CD4-positive, alpha-beta memory T cell (primary cell): ENCODE measurements at regions of chr1 and their contacts with region 1.

Region 1: GRCh38 chr1:86380257-86380861 is 15.8 kb downstream of the ODF2L start:
- DNase-seq: peak in 4 of 5 donors; percentile 49 to 59 (median 54)
- H3K4me3 ChIP-seq: no peak overlapping the region
- H3K4me3 Mint-ChIP-seq: peak overlapping the region in 2 of 8 donors; percentile 38 to 55
- H3K27ac ChIP-seq: no peak overlapping the region
- H3K27ac Mint-ChIP-seq: peak overlapping the region in 3 of 7 donors; percentile 32 to 48 (median 42)
- H3K4me1 ChIP-seq: peaks cover 17% of the 10 kb centered on the region
- H3K4me1 Mint-ChIP-seq: peaks cover 8 to 30% (median 12%) of the 10 kb centered on the region in 4 donors
- H3K27me3 ChIP-seq: no peaks in the 10 kb centered on the region
- H3K27me3 Mint-ChIP-seq: no peaks in the 10 kb centered on the region

Region 2: DNA sequence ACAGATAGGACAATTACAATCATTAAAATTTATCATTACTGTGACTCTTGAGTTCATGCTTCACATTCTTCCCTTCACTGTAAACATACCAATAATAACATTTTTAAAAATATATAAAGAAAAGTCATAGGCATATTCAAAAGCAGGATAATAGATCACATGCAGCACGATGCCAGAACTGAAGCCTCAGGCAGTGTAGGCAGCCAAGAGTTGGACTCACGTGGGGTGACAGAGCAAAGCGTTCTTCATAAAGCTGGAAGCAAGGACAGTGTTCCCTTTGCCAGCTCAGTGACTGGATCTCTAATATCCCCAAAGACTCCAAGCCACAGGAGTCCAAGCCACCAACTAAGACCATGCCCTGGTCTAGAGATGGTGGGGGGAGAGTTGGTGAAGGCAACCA is 61.9 kb before region 1 on chr1:
- CTCF ChIA-PET with region 1: no interaction called
- POLR2A ChIA-PET with region 1: no interaction called
- intact Hi-C with region 1: no loop called
- DNase-seq: no peak
- H3K4me3 ChIP-seq: no peak overlapping the region
- H3K4me3 Mint-ChIP-seq: no peak overlapping the region
- H3K27ac ChIP-seq: no peak overlapping the region
- H3K27ac Mint-ChIP-seq: peak overlapping the region in 1 of 7 donors; percentile 3
- H3K4me1 ChIP-seq: no peaks in the 10 kb centered on the region
- H3K4me1 Mint-ChIP-seq: no peaks in the 10 kb centered on the region
- H3K27me3 ChIP-seq: no peaks in the 10 kb centered on the region
- H3K27me3 Mint-ChIP-seq: peaks cover 3 to 4% of the 10 kb centered on the region in 2 donors

Region 3: DNA sequence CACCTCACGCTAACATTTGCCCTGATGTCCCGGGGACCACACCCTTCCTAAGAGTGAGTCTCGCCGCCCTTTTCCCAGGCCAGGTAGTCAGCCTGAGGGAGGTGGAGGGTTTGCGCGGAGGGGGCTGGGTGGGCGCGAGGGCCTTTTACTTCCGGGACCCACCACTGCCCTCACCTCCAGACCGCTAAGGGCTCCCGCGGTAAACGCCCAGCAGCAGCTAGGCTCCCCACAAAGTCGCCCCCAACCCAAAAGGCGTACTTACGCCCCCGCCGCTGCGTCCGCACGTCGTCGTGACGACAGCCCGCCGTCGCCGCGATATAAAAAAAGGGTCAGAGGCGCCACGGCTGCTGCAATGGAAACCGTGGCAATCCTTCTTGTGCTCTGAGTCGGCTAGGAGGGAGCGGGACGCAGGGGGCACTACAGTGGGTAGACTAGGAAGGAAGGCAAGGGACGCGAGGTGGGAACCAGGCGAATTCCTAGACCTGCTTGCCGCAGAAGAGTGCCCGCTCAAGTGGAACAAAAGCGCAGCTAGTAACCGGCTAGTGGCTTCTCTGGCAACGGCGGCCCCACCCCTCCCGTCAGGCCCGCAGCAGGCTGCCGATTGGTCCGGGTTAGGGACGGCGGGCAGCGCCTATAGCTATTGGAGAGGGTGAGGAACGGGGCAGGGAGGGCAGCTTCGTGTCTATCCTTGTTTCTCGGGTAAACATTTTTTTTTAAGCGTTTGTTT is 15.6 kb after region 1 on chr1 and contains the start of gene ODF2L:
- CTCF ChIA-PET with region 1: interaction called, 13 read pairs
- POLR2A ChIA-PET with region 1: interaction called, 54 read pairs
- intact Hi-C with region 1: loop called (anchors 1 kb)
- DNase-seq: peak; percentile 90 to 94 (median 92)
- H3K4me3 ChIP-seq: peak within 1 kb of the TSS; percentile 77 to 87
- H3K4me3 Mint-ChIP-seq: peak within 1 kb of the TSS; percentile 94 to 99 (median 98)
- H3K27ac ChIP-seq: peak within 1 kb of the TSS; percentile 92
- H3K27ac Mint-ChIP-seq: peak within 1 kb of the TSS; percentile 97 to 100 (median 99)
- H3K4me1 ChIP-seq: peaks cover 56% of the 10 kb centered on the region
- H3K4me1 Mint-ChIP-seq: peaks cover 43 to 68% (median 51%) of the 10 kb centered on the region in 4 donors
- H3K27me3 ChIP-seq: no peaks in the 10 kb centered on the region
- H3K27me3 Mint-ChIP-seq: no peaks in the 10 kb centered on the region
- total RNA-seq, gene ODF2L: 97.3 to 98.3 TPM

Region 4: GRCh38 chr1:86419277-86419903 is 39.0 kb after region 1 on chr1:
- CTCF ChIA-PET with region 1: interaction called, 8 read pairs
- POLR2A ChIA-PET with region 1: no interaction called
- intact Hi-C with region 1: loop called (anchors 1 kb)
- DNase-seq: peak; percentile 47 to 62 (median 52)
- H3K4me3 ChIP-seq: no peak overlapping the region
- H3K4me3 Mint-ChIP-seq: peak overlapping the region; percentile 57 to 86 (median 72)
- H3K27ac ChIP-seq: no peak overlapping the region
- H3K27ac Mint-ChIP-seq: peak overlapping the region in 3 of 7 donors; percentile 53 to 83 (median 78)
- H3K4me1 ChIP-seq: no peaks in the 10 kb centered on the region
- H3K4me1 Mint-ChIP-seq: peaks cover 2 to 6% (median 4%) of the 10 kb centered on the region in 4 donors
- H3K27me3 ChIP-seq: no peaks in the 10 kb centered on the region
- H3K27me3 Mint-ChIP-seq: peaks cover 2 to 9% of the 10 kb centered on the region in 2 donors

Region 5: GRCh38 chr1:86470859-86471258 is 90.5 kb after region 1 on chr1:
- CTCF ChIA-PET with region 1: interaction called, 16 read pairs
- POLR2A ChIA-PET with region 1: no interaction called
- intact Hi-C with region 1: loop called (anchors 1 kb)
- DNase-seq: no peak
- H3K4me3 ChIP-seq: no peak overlapping the region
- H3K4me3 Mint-ChIP-seq: no peak overlapping the region
- H3K27ac ChIP-seq: no peak overlapping the region
- H3K27ac Mint-ChIP-seq: no peak overlapping the region
- H3K4me1 ChIP-seq: no peaks in the 10 kb centered on the region
- H3K4me1 Mint-ChIP-seq: peaks cover 0 to 3% (median 0%) of the 10 kb centered on the region in 4 donors
- H3K27me3 ChIP-seq: peaks cover 3% of the 10 kb centered on the region
- H3K27me3 Mint-ChIP-seq: peaks cover 6 to 7% of the 10 kb centered on the region in 2 donors

Region 6: DNA sequence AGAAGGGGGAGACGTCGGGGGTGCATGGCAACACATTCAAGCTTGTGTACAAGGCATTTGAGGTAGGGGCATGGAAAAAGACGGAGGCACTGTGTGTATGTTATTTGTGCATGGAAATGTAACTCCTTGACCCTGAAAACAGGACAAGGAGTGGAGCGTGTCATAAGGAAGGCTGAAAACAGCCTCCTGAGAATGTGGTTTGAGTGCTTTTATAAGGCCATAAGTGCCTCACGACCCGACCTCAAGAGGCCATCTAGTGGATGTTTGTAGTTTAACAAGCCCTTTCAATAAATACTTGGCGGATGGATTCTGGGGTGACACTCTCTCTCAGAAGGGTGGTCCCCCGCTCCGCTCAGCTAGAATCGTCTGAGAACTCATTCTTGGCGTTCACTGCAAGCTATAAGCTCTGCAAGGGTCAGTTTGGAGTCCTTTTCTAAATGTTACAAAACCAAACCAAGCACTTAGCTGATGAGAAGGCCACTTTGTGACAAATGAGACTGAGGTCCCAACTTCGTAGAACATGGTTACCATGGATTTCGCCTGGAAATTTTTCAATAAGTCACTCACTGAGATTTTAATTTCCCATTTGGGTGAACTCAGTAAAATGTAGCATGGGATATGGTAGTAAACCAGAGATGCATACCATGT is 127.7 kb after region 1 on chr1:
- CTCF ChIA-PET with region 1: interaction called, 117 read pairs
- POLR2A ChIA-PET with region 1: no interaction called
- intact Hi-C with region 1: loop called (anchors 1 kb)
- DNase-seq: peak in 4 of 5 donors; percentile 14 to 23 (median 17)
- H3K4me3 ChIP-seq: no peak overlapping the region
- H3K4me3 Mint-ChIP-seq: no peak overlapping the region
- H3K27ac ChIP-seq: no peak overlapping the region
- H3K27ac Mint-ChIP-seq: no peak overlapping the region
- H3K4me1 ChIP-seq: no peaks in the 10 kb centered on the region
- H3K4me1 Mint-ChIP-seq: peaks cover 0 to 9% (median 1%) of the 10 kb centered on the region in 4 donors
- H3K27me3 ChIP-seq: no peaks in the 10 kb centered on the region
- H3K27me3 Mint-ChIP-seq: peaks cover 8 to 11% of the 10 kb centered on the region in 2 donors

Region 7: GRCh38 chr1:86741947-86742572 is 361.7 kb after region 1 on chr1:
- CTCF ChIA-PET with region 1: interaction called, 5 read pairs
- POLR2A ChIA-PET with region 1: no interaction called
- intact Hi-C with region 1: loop called (anchors 2 kb)
- DNase-seq: peak; percentile 11 to 55 (median 40)
- H3K4me3 ChIP-seq: no peak overlapping the region
- H3K4me3 Mint-ChIP-seq: no peak overlapping the region
- H3K27ac ChIP-seq: no peak overlapping the region
- H3K27ac Mint-ChIP-seq: no peak overlapping the region
- H3K4me1 ChIP-seq: peaks cover 24% of the 10 kb centered on the region
- H3K4me1 Mint-ChIP-seq: peaks cover 2 to 4% (median 4%) of the 10 kb centered on the region in 4 donors
- H3K27me3 ChIP-seq: no peaks in the 10 kb centered on the region
- H3K27me3 Mint-ChIP-seq: no peaks in the 10 kb centered on the region

Region 8: DNA sequence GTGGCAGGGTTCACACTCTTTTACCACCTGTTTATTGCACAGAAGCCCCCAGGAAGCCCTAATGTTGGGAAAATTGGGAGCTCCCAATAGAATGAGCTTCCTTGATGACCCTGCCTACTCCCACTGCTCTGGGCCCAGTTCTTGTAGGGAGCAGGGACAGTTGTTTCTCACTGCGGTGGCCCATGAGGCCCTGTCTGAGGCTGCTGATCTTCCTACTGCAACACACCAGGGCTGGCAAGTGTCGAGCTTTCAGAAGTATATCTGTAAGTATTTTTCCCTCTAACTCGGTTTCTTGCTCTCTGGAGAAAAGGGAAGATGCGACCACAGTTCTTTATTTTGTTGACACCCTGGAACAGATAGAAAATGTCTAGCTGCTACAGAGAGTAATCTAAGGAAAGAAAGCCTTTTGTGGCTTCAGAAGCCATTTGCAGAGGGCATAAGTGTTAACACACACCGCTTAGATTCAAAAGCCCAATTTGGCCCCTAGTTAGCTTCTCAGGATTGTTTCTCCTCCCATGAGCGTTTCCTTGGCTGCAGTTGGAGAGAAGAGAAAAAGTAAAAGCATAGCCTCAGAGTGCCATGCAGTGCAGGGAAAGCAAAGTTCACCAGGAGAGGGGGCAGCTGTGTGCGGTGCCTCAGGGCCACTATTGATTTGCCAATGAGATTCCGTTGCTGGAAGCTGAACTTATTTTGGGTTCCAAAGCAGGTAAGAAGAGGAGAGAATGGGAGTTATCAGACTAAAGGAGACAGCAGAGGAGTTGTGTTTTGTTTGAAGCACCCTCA is 431.0 kb after region 1 on chr1:
- CTCF ChIA-PET with region 1: no interaction called
- POLR2A ChIA-PET with region 1: no interaction called
- intact Hi-C with region 1: no loop called
- DNase-seq: no peak
- H3K4me3 ChIP-seq: no peak overlapping the region
- H3K4me3 Mint-ChIP-seq: no peak overlapping the region
- H3K27ac ChIP-seq: no peak overlapping the region
- H3K27ac Mint-ChIP-seq: no peak overlapping the region
- H3K4me1 ChIP-seq: no peaks in the 10 kb centered on the region
- H3K4me1 Mint-ChIP-seq: no peaks in the 10 kb centered on the region
- H3K27me3 ChIP-seq: no peaks in the 10 kb centered on the region
- H3K27me3 Mint-ChIP-seq: peaks cover 4 to 8% of the 10 kb centered on the region in 2 donors

Region 9: DNA sequence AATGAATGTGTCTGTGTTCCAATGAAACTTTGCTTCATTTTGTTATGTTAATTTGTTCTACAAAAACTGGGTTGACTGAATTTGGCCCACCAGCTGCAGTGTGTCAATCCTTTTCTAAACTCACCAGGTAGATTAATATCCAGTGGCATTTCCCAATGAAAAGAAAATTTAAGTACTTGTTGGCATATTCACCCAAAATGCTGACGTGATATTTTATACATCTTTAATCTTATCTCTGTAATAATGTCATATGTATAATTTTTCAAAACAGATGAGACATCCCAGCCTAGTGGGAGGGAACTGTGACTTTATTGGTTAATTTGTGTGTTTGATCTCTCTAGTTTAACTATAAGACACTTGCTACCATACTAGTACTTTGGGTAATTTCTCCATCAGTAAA is 525.5 kb after region 1 on chr1:
- CTCF ChIA-PET with region 1: no interaction called
- POLR2A ChIA-PET with region 1: no interaction called
- intact Hi-C with region 1: no loop called
- DNase-seq: no peak
- H3K4me3 ChIP-seq: no peak overlapping the region
- H3K4me3 Mint-ChIP-seq: no peak overlapping the region
- H3K27ac ChIP-seq: no peak overlapping the region
- H3K27ac Mint-ChIP-seq: no peak overlapping the region
- H3K4me1 ChIP-seq: peaks cover 64% of the 10 kb centered on the region
- H3K4me1 Mint-ChIP-seq: peaks cover 32 to 41% (median 38%) of the 10 kb centered on the region in 4 donors
- H3K27me3 ChIP-seq: no peaks in the 10 kb centered on the region
- H3K27me3 Mint-ChIP-seq: no peaks in the 10 kb centered on the region

Region 10: GRCh38 chr1:87084244-87084836 is 704.0 kb after region 1 on chr1:
- CTCF ChIA-PET with region 1: interaction called, 8 read pairs
- POLR2A ChIA-PET with region 1: no interaction called
- intact Hi-C with region 1: loop called (anchors 5 kb)
- DNase-seq: peak in 4 of 5 donors; percentile 43 to 46 (median 44)
- H3K4me3 ChIP-seq: no peak overlapping the region
- H3K4me3 Mint-ChIP-seq: no peak overlapping the region
- H3K27ac ChIP-seq: no peak overlapping the region
- H3K27ac Mint-ChIP-seq: no peak overlapping the region
- H3K4me1 ChIP-seq: no peaks in the 10 kb centered on the region
- H3K4me1 Mint-ChIP-seq: peaks cover 0 to 3% (median 1%) of the 10 kb centered on the region in 4 donors
- H3K27me3 ChIP-seq: no peaks in the 10 kb centered on the region
- H3K27me3 Mint-ChIP-seq: no peaks in the 10 kb centered on the region